ENCODE measurements at regions of chr2 and their contacts with region 1.

Region 1: DNA sequence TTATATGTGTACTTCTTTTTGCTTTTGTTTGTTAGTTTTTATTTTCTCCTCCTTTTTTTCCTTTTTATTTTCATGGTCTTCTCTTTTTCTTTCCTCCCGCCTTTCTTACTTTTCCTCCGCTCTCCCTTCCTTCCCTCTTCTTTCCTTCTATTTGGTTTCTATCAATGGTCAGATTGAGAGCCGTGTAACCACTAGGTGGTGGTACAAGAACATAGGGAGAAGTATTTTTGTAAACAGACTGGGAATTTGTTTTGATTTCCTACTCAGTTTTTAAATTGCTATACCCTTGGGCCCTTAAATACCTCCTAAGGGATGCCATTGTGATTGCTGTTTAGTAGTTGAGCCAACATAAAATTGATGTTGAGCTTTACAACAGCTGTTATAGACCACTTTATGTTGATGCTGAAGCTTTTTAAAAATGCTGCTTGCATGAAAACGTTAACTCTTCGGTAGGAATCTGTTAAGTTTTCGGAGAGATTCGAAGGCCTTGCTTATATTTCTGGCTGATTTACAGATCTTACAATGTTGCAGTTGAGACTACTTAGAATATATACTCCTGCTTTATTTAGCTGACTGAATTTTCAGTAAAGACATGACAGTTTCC is 124.2 kb downstream of the UBE2E3 start:
- DNase-seq: peak in 1 of 2 donors; percentile 81
- ATAC-seq: peak in 2 of 3 donors; percentile 66 to 75
- H3K4me3 ChIP-seq: no peak overlapping the region
- H3K4me3 Mint-ChIP-seq: no peak overlapping the region
- H3K27ac ChIP-seq: peak overlapping the region; percentile 29
- H3K27ac Mint-ChIP-seq: peak overlapping the region in 1 of 2 donors; percentile 6
- H3K4me1 ChIP-seq: peaks cover 6% of the 10 kb centered on the region
- H3K4me1 Mint-ChIP-seq: peaks cover 25 to 27% of the 10 kb centered on the region in 2 donors
- H3K27me3 ChIP-seq: no peaks in the 10 kb centered on the region
- H3K27me3 Mint-ChIP-seq: peaks cover 0 to 3% of the 10 kb centered on the region in 2 donors
- CTCF ChIP-seq: peak; percentile 89

Region 2: GRCh38 chr2:181140414-181140813 is 35.8 kb after region 1 on chr2:
- intact Hi-C with region 1: loop called (anchors 5 kb)
- DNase-seq: peak in 1 of 2 donors; percentile 69
- ATAC-seq: peak; percentile 45 to 58 (median 54)
- H3K4me3 ChIP-seq: no peak overlapping the region
- H3K4me3 Mint-ChIP-seq: peak overlapping the region; percentile 28
- H3K27ac ChIP-seq: no peak overlapping the region
- H3K27ac Mint-ChIP-seq: peak overlapping the region; percentile 91 to 92
- H3K4me1 ChIP-seq: peaks cover 24% of the 10 kb centered on the region
- H3K4me1 Mint-ChIP-seq: peaks cover 72 to 73% of the 10 kb centered on the region in 2 donors
- H3K27me3 ChIP-seq: no peaks in the 10 kb centered on the region
- H3K27me3 Mint-ChIP-seq: no peaks in the 10 kb centered on the region
- CTCF ChIP-seq: no peak

Region 3: DNA sequence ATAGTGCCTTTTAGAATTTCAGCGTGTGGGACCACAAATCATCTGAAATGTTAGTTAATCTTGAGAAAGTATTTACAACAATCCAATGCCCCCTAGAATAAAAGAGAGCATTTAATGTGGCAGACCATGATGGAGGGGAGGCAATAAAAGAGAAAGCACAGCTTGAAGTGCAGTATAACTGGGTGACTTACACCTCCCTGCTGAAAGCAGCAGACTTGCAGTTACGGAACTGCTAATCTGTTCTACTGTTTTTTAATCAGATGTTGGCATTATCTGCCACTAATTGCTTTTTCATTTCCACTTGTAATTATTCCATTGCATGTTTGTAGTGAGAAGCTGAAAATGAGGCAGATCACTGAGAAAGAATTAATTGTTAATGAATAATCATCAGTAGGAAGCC is 222.0 kb after region 1 on chr2:
- intact Hi-C with region 1: loop called (anchors 1 kb)
- DNase-seq: no peak
- ATAC-seq: peak in 1 of 3 donors; percentile 40
- H3K4me3 ChIP-seq: no peak overlapping the region
- H3K4me3 Mint-ChIP-seq: no peak overlapping the region
- H3K27ac ChIP-seq: no peak overlapping the region
- H3K27ac Mint-ChIP-seq: no peak overlapping the region
- H3K4me1 ChIP-seq: no peaks in the 10 kb centered on the region
- H3K4me1 Mint-ChIP-seq: peaks cover 0 to 10% of the 10 kb centered on the region in 2 donors
- H3K27me3 ChIP-seq: no peaks in the 10 kb centered on the region
- H3K27me3 Mint-ChIP-seq: no peaks in the 10 kb centered on the region
- CTCF ChIP-seq: no peak

Region 4: DNA sequence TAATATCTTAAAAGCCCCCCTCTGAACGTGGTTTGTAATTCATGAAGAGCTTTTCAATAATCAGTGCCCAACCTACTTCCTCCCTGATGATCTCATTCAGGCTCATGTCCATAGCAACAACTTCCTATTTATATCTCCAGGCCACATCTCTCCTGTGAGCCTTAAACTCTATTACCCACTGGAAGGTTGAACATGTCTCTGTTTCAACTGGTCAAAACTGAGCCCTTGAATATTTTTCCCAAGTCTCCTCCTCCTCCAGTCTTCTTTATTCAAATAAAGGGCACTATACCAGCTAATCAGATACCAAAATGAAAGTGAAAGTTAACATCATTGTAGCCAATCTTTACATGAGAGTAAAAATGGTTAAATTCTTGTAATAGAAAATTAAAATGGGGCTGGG is 288.9 kb after region 1 on chr2:
- intact Hi-C with region 1: loop called (anchors 2 kb)
- DNase-seq: peak in 1 of 2 donors; percentile 66
- ATAC-seq: peak; percentile 57 to 79 (median 65)
- H3K4me3 ChIP-seq: peak overlapping the region; percentile 53
- H3K4me3 Mint-ChIP-seq: peak overlapping the region; percentile 95
- H3K27ac ChIP-seq: peak overlapping the region; percentile 99
- H3K27ac Mint-ChIP-seq: peak overlapping the region; percentile 92 to 98
- H3K4me1 ChIP-seq: peaks cover 8% of the 10 kb centered on the region
- H3K4me1 Mint-ChIP-seq: peaks cover 21 to 27% of the 10 kb centered on the region in 2 donors
- H3K27me3 ChIP-seq: no peaks in the 10 kb centered on the region
- H3K27me3 Mint-ChIP-seq: no peaks in the 10 kb centered on the region
- CTCF ChIP-seq: no peak

Measured in natural killer cell (primary cell).